ENCODE measurements at regions of chr3 and their contacts with region 1.

Region 1: GRCh38 chr3:142296507-142296906 is 71.1 kb upstream of the GK5 start:
- DNase-seq: no peak
- H3K4me3 ChIP-seq: no peak overlapping the region
- CTCF ChIP-seq: no peak
- POLR2A ChIP-seq: no peak

Region 2: GRCh38 chr3:141308631-141309085 is 987.8 kb before region 1 on chr3:
- intact Hi-C with region 1: loop called (anchors 5 kb)
- DNase-seq: no peak
- H3K4me3 ChIP-seq: no peak overlapping the region
- CTCF ChIP-seq: no peak
- POLR2A ChIP-seq: no peak

Region 3: GRCh38 chr3:142152384-142152783 is 144.1 kb before region 1 on chr3:
- intact Hi-C with region 1: no loop called
- DNase-seq: no peak
- H3K4me3 ChIP-seq: no peak overlapping the region
- CTCF ChIP-seq: no peak
- POLR2A ChIP-seq: no peak

Measured in lower leg skin (tissue), 4 donors.